Common myeloid progenitor, CD34-positive (primary cell): ENCODE measurements at regions of chr14 and their contacts with region 1.

Region 1: GRCh38 chr14:70907176-70907995 is at the start of gene PCNX1:
- DNase-seq: peak; percentile 86 to 94 (median 93)
- H3K4me3 ChIP-seq: peak within 1 kb of the TSS; percentile 83 to 97 (median 89)
- H3K27ac ChIP-seq: peak within 1 kb of the TSS; percentile 50 to 84
- H3K4me1 ChIP-seq: peaks cover 14 to 26% (median 20%) of the 10 kb centered on the region in 4 experiments
- H3K27me3 ChIP-seq: no peaks in the 10 kb centered on the region

Region 2: DNA sequence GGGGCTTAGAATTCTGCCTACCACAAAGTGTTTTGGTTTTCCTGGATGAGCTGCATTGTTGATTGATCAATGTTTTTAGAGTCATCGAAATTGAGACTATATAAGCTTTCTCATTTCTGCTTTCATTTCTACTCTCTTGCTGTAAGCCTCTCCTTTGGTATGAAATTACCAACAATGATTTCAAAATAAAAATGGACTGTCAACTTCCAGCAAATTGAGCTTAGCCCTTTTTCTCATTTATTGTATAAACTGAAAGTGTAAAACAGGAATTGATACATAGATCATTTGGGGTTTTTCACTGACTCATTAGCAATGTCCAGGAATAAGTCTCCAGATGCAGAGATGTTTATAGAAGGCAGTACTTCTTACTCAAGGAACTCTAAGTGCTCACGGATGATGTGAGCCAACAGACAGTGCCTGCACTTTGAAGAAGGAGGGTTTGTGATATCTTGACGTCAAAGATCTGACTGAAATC is 20.1 kb before region 1 on chr14:
- CTCF ChIA-PET with region 1: interaction called, 38 read pairs
- POLR2A ChIA-PET with region 1: no interaction called
- DNase-seq: peak in 2 of 3 donors; percentile 27 to 41
- H3K4me3 ChIP-seq: peak overlapping the region in 6 of 7 experiments; percentile 19 to 65 (median 42)
- H3K27ac ChIP-seq: no peak overlapping the region
- H3K4me1 ChIP-seq: peaks cover 59 to 74% (median 69%) of the 10 kb centered on the region in 4 experiments
- H3K27me3 ChIP-seq: no peaks in the 10 kb centered on the region

Region 3: GRCh38 chr14:70894868-70895267 is 12.5 kb before region 1 on chr14:
- CTCF ChIA-PET with region 1: interaction called, 38 read pairs
- POLR2A ChIA-PET with region 1: no interaction called
- DNase-seq: no peak
- H3K4me3 ChIP-seq: no peak overlapping the region
- H3K27ac ChIP-seq: no peak overlapping the region
- H3K4me1 ChIP-seq: peaks cover 7 to 10% (median 9%) of the 10 kb centered on the region in 4 experiments
- H3K27me3 ChIP-seq: no peaks in the 10 kb centered on the region

Region 4: GRCh38 chr14:70942342-70942706 is 34.9 kb after region 1 on chr14:
- CTCF ChIA-PET with region 1: no interaction called
- POLR2A ChIA-PET with region 1: no interaction called
- DNase-seq: no peak
- H3K4me3 ChIP-seq: no peak overlapping the region
- H3K27ac ChIP-seq: no peak overlapping the region
- H3K4me1 ChIP-seq: no peaks in the 10 kb centered on the region
- H3K27me3 ChIP-seq: no peaks in the 10 kb centered on the region

Region 5: DNA sequence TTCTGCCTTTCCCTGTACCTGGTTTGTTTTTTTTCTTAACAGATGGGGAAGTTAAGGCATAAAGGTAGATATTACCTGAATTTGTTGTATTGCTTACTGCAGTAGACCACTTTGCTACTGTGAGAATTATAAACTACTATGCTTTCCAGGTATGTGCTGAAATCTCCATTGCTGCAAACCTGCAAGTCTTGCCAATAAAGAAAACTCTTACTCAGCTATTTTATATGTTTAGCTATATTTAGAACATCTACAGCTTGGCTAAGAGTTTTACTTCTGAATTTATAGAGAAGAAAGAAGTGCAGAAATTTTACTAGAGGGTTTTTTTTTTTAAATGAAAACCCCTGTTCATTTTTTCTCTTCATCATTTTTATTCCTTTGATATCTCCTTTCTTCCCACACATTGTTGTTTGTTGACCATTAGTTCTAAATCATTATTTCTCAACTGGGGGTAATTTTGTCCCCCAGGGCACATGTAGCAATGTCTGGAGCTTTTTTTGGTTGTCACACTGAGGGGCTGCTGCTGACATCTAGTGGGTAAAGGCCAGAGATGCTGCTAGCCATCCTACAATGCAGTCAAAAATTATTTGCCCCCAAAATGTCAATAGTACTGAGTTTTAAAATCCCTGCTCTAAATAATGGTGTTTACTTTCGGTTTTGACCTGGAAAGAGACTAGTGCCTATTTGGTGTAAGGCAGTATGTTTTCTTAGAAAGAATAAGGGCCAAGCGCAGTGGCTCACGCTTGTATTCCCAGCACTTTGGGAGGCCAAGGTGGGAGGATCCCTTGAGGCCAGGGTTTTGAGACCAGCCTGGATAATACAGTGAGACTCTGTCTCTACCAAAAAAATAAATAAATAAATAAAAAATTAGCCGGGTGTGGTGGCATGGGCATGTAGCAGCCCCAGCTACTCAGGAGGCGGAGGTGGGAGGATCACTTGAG is 48.4 kb after region 1 on chr14:
- CTCF ChIA-PET with region 1: interaction called, 51 read pairs
- POLR2A ChIA-PET with region 1: interaction called, 4 read pairs
- DNase-seq: peak; percentile 48 to 69 (median 65)
- H3K4me3 ChIP-seq: no peak overlapping the region
- H3K27ac ChIP-seq: no peak overlapping the region
- H3K4me1 ChIP-seq: peaks cover 0 to 4% (median 1%) of the 10 kb centered on the region in 4 experiments
- H3K27me3 ChIP-seq: no peaks in the 10 kb centered on the region